ENCODE measurements at regions of chr10 and their contacts with region 1.

Region 1: GRCh38 chr10:119705434-119705831 is 20.4 kb upstream of the INPP5F start:
- DNase-seq: peak; percentile 31
- ATAC-seq: peak; percentile 25
- H3K4me3 Mint-ChIP-seq: peak overlapping the region; percentile 59
- H3K27ac Mint-ChIP-seq: peak overlapping the region; percentile 97
- H3K4me1 Mint-ChIP-seq: peaks cover 95% of the 10 kb centered on the region
- H3K27me3 Mint-ChIP-seq: no peaks in the 10 kb centered on the region
- CTCF ChIP-seq: no peak

Region 2: GRCh38 chr10:119517235-119518141 is 187.9 kb before region 1 on chr10:
- CTCF ChIA-PET with region 1: no interaction called
- POLR2A ChIA-PET with region 1: no interaction called
- intact Hi-C with region 1: loop called (anchors 5 kb)
- DNase-seq: peak; percentile 59
- ATAC-seq: peak; percentile 71
- H3K4me3 Mint-ChIP-seq: peak overlapping the region; percentile 67
- H3K27ac Mint-ChIP-seq: peak overlapping the region; percentile 94
- H3K4me1 Mint-ChIP-seq: peaks cover 34% of the 10 kb centered on the region
- H3K27me3 Mint-ChIP-seq: no peaks in the 10 kb centered on the region
- CTCF ChIP-seq: no peak

Region 3: DNA sequence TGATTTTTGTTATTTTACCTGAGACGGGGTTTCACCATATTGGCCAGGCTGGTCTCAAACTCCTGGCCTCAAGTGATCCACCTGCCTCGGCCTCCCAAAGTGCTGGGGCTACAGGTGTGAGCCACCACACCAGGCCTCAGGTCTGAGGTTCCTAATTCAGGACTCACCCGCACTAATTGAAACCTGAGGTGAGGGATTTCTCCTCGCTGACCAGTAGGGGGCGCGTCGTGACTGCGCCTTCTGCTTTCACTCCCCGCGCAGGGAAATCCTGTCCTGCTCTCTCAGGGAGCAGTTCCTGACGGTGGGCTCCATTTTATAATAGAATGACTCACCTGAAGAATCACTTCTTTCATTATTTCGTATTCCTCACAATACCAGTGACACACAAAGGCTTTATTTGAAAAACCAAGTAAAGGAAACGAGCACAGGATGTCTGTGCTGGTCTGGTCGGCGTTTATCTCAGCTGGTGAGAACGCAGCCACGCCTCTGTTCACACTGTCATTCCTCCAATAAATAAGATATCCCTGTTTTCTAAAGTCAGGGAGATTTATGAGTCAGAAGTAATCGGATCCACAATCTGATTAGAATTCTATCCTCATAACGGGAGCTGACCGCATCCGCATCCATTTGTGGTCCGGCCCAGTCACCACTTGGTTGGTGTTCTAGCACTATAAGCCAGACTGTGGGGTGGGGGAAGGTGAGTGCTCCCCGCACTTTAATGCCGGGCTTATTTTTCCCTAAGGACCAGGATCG is 18.8 kb before region 1 on chr10:
- CTCF ChIA-PET with region 1: interaction called, 9 read pairs
- POLR2A ChIA-PET with region 1: interaction called, 28 read pairs
- intact Hi-C with region 1: loop called (anchors 1 kb)
- DNase-seq: peak; percentile 68
- ATAC-seq: peak; percentile 93
- H3K4me3 Mint-ChIP-seq: peak overlapping the region; percentile 71
- H3K27ac Mint-ChIP-seq: peak overlapping the region; percentile 77
- H3K4me1 Mint-ChIP-seq: peaks cover 28% of the 10 kb centered on the region
- H3K27me3 Mint-ChIP-seq: peaks cover 3% of the 10 kb centered on the region
- CTCF ChIP-seq: peak; percentile 93

Region 4: GRCh38 chr10:119715628-119716505 is 10.4 kb after region 1 on chr10:
- CTCF ChIA-PET with region 1: interaction called, 7 read pairs
- POLR2A ChIA-PET with region 1: interaction called, 10 read pairs
- intact Hi-C with region 1: no loop called
- DNase-seq: no peak
- ATAC-seq: no peak
- H3K4me3 Mint-ChIP-seq: no peak overlapping the region
- H3K27ac Mint-ChIP-seq: peak overlapping the region; percentile 56
- H3K4me1 Mint-ChIP-seq: peaks cover 20% of the 10 kb centered on the region
- H3K27me3 Mint-ChIP-seq: no peaks in the 10 kb centered on the region
- CTCF ChIP-seq: no peak

Region 5: GRCh38 chr10:119784340-119785070 is 79.1 kb after region 1 on chr10:
- CTCF ChIA-PET with region 1: no interaction called
- POLR2A ChIA-PET with region 1: interaction called, 12 read pairs
- intact Hi-C with region 1: no loop called
- DNase-seq: no peak
- ATAC-seq: peak; percentile 54
- H3K4me3 Mint-ChIP-seq: peak overlapping the region; percentile 64
- H3K27ac Mint-ChIP-seq: peak overlapping the region; percentile 77
- H3K4me1 Mint-ChIP-seq: peaks cover 53% of the 10 kb centered on the region
- H3K27me3 Mint-ChIP-seq: no peaks in the 10 kb centered on the region
- CTCF ChIP-seq: no peak